ENCODE measurements at regions of chr14 and their contacts with region 1.

Region 1: GRCh38 chr14:90697577-90698206 is 118.5 kb downstream of the TTC7B start:
- DNase-seq: peak; percentile 85 to 88 (median 87)
- ATAC-seq: peak; percentile 88 to 93 (median 89)
- H3K4me3 ChIP-seq: peak overlapping the region in 2 of 12 donors; percentile 4 to 14
- H3K27ac ChIP-seq: peak overlapping the region; percentile 17 to 89 (median 75)
- H3K4me1 ChIP-seq: peaks cover 4 to 50% (median 30%) of the 10 kb centered on the region in 12 donors
- H3K27me3 ChIP-seq: no peaks in the 10 kb centered on the region
- CTCF ChIP-seq: peak; percentile 91 to 98 (median 95)
- POLR2A ChIP-seq: no peak

Region 2: DNA sequence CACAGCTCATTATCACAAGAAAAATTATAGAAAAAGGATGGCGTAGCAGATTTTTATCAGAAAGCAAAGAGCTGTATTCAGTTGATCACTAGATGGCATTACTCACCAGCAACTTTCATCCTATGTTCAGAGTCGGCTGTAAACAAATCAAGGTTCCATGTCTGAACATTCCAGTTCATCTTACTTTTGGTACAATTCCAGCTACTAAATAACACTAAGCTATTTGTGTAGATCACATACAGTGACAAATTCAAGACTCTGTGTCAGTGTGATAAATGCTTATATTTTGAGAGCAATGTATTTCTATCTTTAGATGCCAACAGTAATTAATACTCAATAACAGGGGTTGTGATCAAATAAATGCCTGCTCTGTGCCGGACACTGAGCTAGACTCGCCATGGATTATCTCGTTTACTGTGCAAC is 396.0 kb before region 1 on chr14:
- intact Hi-C with region 1: loop called (anchors 1 to 10 kb)
- DNase-seq: no peak
- ATAC-seq: peak; percentile 23 to 70 (median 42)
- H3K4me3 ChIP-seq: no peak overlapping the region
- H3K27ac ChIP-seq: peak overlapping the region in 11 of 12 donors; percentile 11 to 73 (median 42)
- H3K4me1 ChIP-seq: peaks cover 5 to 43% (median 16%) of the 10 kb centered on the region in 12 donors
- H3K27me3 ChIP-seq: no peaks in the 10 kb centered on the region
- CTCF ChIP-seq: peak; percentile 30 to 74 (median 60)
- POLR2A ChIP-seq: no peak

Region 3: DNA sequence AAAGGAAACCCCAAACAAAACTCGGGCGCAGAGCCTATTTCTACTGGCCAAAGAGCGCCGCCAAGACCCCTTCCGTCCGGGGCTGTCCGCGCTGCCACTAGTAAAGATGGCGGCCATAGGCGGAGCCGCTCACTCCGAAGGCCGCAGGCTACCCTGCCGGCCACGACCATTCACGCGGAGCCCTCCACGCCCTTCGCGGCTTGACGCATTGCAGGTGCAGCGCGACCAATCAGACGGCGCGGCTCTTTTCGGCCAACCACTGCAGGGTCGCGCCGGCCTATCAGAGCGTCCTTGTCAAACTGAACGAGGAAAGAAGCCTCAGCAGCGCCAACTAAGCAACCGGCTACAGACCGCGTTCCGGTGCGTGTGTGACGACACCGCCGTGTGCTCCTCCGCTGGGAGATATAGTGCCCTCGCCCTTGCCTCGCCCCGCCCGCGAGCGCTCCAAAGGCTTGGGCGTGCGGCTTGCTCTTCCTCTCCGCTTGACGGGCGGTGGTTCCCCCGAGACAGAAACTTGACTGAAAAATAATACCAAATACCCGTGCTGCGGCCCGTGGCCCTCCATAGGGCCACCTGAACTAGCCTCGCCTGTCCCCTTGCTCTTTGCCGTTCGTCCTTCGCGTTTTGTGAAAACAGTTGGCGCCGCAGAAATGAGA is 314.5 kb before region 1 on chr14:
- intact Hi-C with region 1: loop called in 3 of 10 experiments (anchors 1 to 5 kb)
- DNase-seq: peak; percentile 100
- ATAC-seq: peak; percentile 93 to 98 (median 96)
- H3K4me3 ChIP-seq: peak overlapping the region; percentile 47 to 80 (median 66)
- H3K27ac ChIP-seq: peak overlapping the region; percentile 98 to 100 (median 99)
- H3K4me1 ChIP-seq: peaks cover 4 to 44% (median 27%) of the 10 kb centered on the region in 12 donors
- H3K27me3 ChIP-seq: no peaks in the 10 kb centered on the region
- CTCF ChIP-seq: peak in 7 of 12 donors; percentile 10 to 31 (median 25)
- POLR2A ChIP-seq: peak; percentile 31 to 91

Region 4: GRCh38 chr14:90513161-90514014 is 184.3 kb before region 1 on chr14:
- intact Hi-C with region 1: loop called in 2 of 10 experiments (anchors 5 to 10 kb)
- DNase-seq: peak; percentile 71 to 93 (median 86)
- ATAC-seq: peak; percentile 93 to 95 (median 93)
- H3K4me3 ChIP-seq: no peak overlapping the region
- H3K27ac ChIP-seq: peak overlapping the region; percentile 27 to 94 (median 80)
- H3K4me1 ChIP-seq: peaks cover 3 to 40% (median 27%) of the 10 kb centered on the region in 12 donors
- H3K27me3 ChIP-seq: no peaks in the 10 kb centered on the region
- CTCF ChIP-seq: peak in 1 of 12 donors; percentile 13
- POLR2A ChIP-seq: no peak

Region 5: GRCh38 chr14:90518941-90519256 is 178.8 kb before region 1 on chr14:
- intact Hi-C with region 1: loop called in 2 of 10 experiments (anchors 5 to 10 kb)
- DNase-seq: peak in 3 of 5 donors; percentile 25 to 48 (median 26)
- ATAC-seq: no peak
- H3K4me3 ChIP-seq: no peak overlapping the region
- H3K27ac ChIP-seq: peak overlapping the region in 2 of 12 donors; percentile 8 to 83
- H3K4me1 ChIP-seq: peaks cover 0 to 66% (median 39%) of the 10 kb centered on the region in 12 donors
- H3K27me3 ChIP-seq: no peaks in the 10 kb centered on the region
- CTCF ChIP-seq: peak; percentile 32 to 64 (median 40)
- POLR2A ChIP-seq: no peak

Region 6: GRCh38 chr14:90611936-90612335 is 85.8 kb before region 1 on chr14:
- intact Hi-C with region 1: loop called in 2 of 10 experiments (anchors 5 kb)
- DNase-seq: no peak
- ATAC-seq: peak in 1 of 4 donors; percentile 41
- H3K4me3 ChIP-seq: no peak overlapping the region
- H3K27ac ChIP-seq: peak overlapping the region in 10 of 12 donors; percentile 8 to 77 (median 54)
- H3K4me1 ChIP-seq: peaks cover 0 to 70% (median 42%) of the 10 kb centered on the region in 12 donors
- H3K27me3 ChIP-seq: no peaks in the 10 kb centered on the region
- CTCF ChIP-seq: no peak
- POLR2A ChIP-seq: no peak

Region 7: GRCh38 chr14:90805662-90806540 is 108.2 kb after region 1 on chr14:
- intact Hi-C with region 1: loop called in 1 of 10 experiments (anchors 5 kb)
- DNase-seq: peak in 3 of 5 donors; percentile 46 to 67 (median 63)
- ATAC-seq: peak; percentile 35 to 58 (median 47)
- H3K4me3 ChIP-seq: no peak overlapping the region
- H3K27ac ChIP-seq: peak overlapping the region in 4 of 12 donors; percentile 3 to 54 (median 17)
- H3K4me1 ChIP-seq: peaks cover 7 to 77% (median 51%) of the 10 kb centered on the region in 12 donors
- H3K27me3 ChIP-seq: no peaks in the 10 kb centered on the region
- CTCF ChIP-seq: no peak
- POLR2A ChIP-seq: no peak

Measured in heart left ventricle (tissue), 16 donors.